ENCODE measurements at regions of chr1 and their contacts with region 1.

Region 1: DNA sequence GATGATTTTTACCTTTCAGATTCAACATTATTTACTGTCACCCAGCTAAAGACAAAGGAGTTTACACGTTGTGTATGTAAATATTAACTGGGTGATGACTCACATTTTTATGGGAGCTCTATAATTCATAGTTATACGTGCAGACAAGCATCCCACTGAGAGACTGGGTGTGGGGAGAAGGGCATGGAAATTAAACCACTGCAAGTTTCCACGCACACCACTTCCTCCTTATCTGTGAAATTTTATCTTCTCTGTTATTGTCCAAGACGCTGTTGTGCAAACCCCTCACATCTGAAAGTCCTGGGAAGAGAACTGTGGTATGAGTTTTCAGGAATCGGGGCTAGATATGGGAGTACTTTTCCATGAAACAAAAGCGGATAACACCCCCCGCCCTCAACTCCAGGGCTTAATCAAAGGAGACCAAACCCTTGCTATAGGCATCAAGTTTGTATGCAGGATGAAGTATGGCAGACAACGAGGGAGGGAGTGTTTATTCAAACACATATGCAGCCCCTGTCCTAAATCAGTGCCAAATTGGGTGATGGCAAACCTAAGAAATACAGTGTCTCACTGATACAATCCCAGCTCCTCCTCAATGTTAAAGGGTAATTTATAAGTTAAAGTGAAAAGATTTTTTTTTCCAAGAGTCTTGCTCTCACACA is 23.3 kb upstream of the DPT start:
- DNase-seq: peak; percentile 91
- ATAC-seq: peak; percentile 92
- H3K4me3 ChIP-seq: peak overlapping the region; percentile 47
- H3K27ac ChIP-seq: peak overlapping the region; percentile 77
- H3K4me1 ChIP-seq: peaks cover 24% of the 10 kb centered on the region
- H3K27me3 ChIP-seq: no peaks in the 10 kb centered on the region
- CTCF ChIP-seq: no peak

Region 2: GRCh38 chr1:168628807-168629206 is 123.5 kb before region 1 on chr1:
- CTCF ChIA-PET with region 1: no interaction called
- POLR2A ChIA-PET with region 1: no interaction called
- intact Hi-C with region 1: loop called (anchors 1 kb)
- DNase-seq: peak; percentile 98
- ATAC-seq: peak; percentile 97
- H3K4me3 ChIP-seq: peak overlapping the region; percentile 6; the same call in 1 of the 2 replicates
- H3K27ac ChIP-seq: peak overlapping the region; percentile 84
- H3K4me1 ChIP-seq: peaks cover 34% of the 10 kb centered on the region
- H3K27me3 ChIP-seq: no peaks in the 10 kb centered on the region
- CTCF ChIP-seq: no peak

Region 3: DNA sequence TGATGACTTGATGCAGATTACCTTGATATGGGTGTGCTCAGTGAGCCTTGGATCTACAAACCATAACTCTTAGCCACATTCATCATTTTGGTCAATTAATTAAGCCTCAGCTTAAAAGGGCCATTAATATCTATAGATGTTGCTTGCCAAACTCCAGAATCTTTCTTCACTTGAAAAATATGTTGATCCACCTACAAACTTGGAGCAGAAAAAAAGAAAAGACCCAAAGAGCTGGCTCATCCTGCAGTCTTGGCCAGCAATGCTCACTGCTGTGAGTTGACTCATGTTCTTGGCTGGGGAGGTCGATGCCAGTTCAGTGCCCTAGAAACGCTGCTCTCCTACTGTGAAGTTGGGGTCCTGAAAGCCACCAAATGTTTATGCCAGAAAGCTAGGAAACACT is 98.7 kb before region 1 on chr1:
- CTCF ChIA-PET with region 1: no interaction called
- POLR2A ChIA-PET with region 1: no interaction called
- intact Hi-C with region 1: no loop called
- DNase-seq: peak; percentile 32
- ATAC-seq: no peak
- H3K4me3 ChIP-seq: no peak overlapping the region
- H3K27ac ChIP-seq: no peak overlapping the region
- H3K4me1 ChIP-seq: no peaks in the 10 kb centered on the region
- H3K27me3 ChIP-seq: no peaks in the 10 kb centered on the region
- CTCF ChIP-seq: no peak

Region 4: DNA sequence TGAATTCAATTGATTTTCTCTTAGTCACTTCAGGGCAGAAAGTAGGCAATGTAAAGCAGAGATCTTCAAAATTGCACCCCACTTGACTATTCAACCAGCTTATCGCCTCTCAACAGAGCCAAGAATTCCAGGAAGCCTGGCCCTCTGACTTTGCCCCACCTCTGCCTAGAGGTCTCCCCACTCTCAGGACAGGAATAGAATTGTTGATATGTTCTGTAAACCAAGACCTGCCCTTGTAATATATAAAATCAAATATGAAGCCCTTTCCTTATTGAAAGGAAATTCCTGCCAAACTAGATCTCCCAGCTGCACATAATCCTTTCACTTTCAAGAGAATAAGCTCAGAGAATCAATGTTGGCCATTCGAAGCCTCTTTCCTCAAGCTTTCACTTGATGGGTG is 92.8 kb after region 1 on chr1:
- CTCF ChIA-PET with region 1: no interaction called
- POLR2A ChIA-PET with region 1: no interaction called
- intact Hi-C with region 1: loop called (anchors 5 kb)
- DNase-seq: no peak
- ATAC-seq: no peak
- H3K4me3 ChIP-seq: no peak overlapping the region
- H3K27ac ChIP-seq: no peak overlapping the region
- H3K4me1 ChIP-seq: peaks cover 22% of the 10 kb centered on the region
- H3K27me3 ChIP-seq: no peaks in the 10 kb centered on the region
- CTCF ChIP-seq: no peak

Region 5: DNA sequence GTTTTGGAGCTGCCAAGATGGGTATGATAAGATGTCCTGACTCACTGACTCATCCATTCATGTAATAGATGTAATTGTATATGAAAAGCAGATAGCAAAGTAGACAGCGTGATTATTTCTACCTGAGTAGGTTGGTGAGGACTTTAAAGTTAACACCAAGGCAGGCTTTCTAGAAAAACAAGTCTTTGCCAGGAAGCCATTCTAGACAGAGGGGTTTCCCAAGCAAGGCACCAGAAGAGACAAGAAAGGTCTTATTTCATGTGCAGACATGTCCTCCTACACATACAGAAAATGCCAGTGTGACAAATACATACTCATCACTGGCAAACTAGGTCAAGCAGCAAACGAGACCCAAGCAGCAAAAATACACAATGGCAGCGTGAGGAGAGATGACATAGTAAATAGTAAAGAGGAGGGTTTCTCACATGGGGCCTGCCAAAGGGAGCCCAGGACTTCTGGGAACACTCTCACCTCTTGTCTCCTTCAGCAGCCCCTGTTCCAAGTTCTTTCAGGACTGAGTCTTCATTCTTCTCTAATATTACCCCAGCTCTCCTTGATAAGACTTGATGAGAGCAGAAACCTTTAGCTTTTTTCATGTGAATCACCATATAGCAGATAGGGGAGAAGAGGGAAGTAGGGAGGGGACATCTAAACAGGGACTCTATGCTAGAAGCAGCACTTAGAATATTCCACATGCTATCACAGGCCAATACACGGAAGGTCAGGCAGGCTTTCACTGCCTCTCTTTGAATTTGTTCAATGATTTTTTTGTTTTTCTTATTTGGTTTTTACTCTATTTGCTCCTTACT is 239.6 kb after region 1 on chr1:
- CTCF ChIA-PET with region 1: no interaction called
- POLR2A ChIA-PET with region 1: no interaction called
- intact Hi-C with region 1: no loop called
- DNase-seq: peak; percentile 30
- ATAC-seq: no peak
- H3K4me3 ChIP-seq: no peak overlapping the region
- H3K27ac ChIP-seq: no peak overlapping the region
- H3K4me1 ChIP-seq: no peaks in the 10 kb centered on the region
- H3K27me3 ChIP-seq: no peaks in the 10 kb centered on the region
- CTCF ChIP-seq: no peak

Measured in PC-3 (cell line).